GM10248 (cell line): ENCODE measurements at regions of chr11 and their contacts with region 1.

Region 1: GRCh38 chr11:95150946-95151684 is 61.5 kb downstream of the ENDOD1 start:
- DNase-seq: peak; percentile 93
- CTCF ChIP-seq: peak; percentile 84

Region 2: DNA sequence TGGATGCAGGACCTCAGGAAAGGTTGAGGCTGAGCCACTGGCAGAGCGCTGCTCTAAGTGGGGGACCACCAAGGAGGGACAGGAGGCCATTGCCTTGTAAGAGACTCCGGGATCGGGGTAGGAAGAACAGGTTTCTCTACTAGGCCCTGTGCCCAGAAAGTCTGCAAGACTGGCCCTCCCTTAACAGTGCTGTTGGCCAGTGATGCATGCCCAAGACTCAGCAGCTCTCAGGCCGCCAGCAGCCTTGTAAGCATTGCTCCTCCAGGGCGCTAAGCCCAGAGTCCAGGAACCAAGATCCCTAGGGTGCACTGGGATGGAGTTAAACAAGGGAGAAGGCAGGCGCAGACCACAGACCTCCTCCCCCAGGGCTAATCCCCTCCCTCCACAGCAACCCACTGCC is 1061.8 kb before region 1 on chr11:
- CTCF ChIA-PET with region 1: no interaction called
- POLR2A ChIA-PET with region 1: no interaction called
- DNase-seq: no peak
- CTCF ChIP-seq: no peak

Region 3: GRCh38 chr11:95138448-95138847 is 12.7 kb before region 1 on chr11:
- CTCF ChIA-PET with region 1: interaction called, 78 read pairs
- POLR2A ChIA-PET with region 1: no interaction called
- DNase-seq: peak; percentile 54
- CTCF ChIP-seq: peak; percentile 48

Region 4: DNA sequence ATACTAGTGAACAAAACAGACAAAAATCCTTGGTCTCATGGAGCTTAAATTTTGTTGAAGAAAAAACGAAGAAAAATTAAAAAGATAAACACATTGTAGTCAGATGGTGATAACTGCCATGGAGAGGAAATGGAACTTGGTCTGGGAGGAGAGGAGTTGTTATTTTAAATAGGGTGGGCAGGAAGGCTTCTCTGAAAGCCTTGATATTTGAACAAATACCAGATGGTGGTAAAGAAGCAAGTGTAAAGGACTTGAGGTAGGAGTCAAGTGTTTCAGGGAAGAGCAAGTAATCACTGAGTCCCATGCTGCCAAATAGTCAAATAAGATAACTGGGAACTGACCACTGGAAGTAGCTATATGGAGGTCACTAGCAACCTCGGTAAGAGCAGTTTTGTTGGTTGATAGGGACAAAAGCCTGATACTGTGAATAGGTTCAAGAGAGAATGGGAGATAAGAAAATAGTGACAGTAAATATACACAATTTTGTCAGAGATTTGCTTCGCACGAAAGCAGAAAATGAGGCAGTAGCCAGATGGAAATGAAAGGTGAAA is 24.8 kb after region 1 on chr11:
- CTCF ChIA-PET with region 1: interaction called, 11 read pairs
- POLR2A ChIA-PET with region 1: no interaction called
- DNase-seq: no peak
- CTCF ChIP-seq: no peak

Region 5: GRCh38 chr11:95187723-95188122 is 36.6 kb after region 1 on chr11:
- CTCF ChIA-PET with region 1: no interaction called
- POLR2A ChIA-PET with region 1: no interaction called
- DNase-seq: no peak
- CTCF ChIP-seq: no peak

Region 6: DNA sequence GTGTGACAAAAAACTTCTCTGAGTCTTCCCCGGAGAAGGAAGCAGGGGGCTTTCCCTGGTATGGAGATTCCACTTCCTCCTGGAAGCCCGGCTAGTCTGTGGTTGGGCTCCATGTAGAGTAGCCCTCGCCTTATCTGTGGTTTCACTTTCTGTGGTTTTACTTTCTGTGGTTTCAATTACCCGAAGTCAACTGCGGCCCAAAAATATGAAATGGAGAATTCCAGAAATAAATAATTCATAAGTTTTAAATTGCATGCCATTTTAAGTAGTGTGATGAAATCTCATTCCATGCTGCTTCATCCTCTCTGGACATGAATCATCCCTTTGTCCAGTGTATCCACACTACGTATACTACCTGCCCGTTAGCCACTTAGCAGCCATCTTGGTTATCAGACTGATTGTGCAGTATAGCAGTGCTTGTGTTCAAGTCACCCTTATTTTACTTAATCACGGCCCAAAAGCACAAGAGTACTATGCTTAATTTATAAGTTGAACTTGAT is 354.9 kb after region 1 on chr11:
- CTCF ChIA-PET with region 1: no interaction called
- POLR2A ChIA-PET with region 1: no interaction called
- DNase-seq: no peak
- CTCF ChIP-seq: no peak

Region 7: DNA sequence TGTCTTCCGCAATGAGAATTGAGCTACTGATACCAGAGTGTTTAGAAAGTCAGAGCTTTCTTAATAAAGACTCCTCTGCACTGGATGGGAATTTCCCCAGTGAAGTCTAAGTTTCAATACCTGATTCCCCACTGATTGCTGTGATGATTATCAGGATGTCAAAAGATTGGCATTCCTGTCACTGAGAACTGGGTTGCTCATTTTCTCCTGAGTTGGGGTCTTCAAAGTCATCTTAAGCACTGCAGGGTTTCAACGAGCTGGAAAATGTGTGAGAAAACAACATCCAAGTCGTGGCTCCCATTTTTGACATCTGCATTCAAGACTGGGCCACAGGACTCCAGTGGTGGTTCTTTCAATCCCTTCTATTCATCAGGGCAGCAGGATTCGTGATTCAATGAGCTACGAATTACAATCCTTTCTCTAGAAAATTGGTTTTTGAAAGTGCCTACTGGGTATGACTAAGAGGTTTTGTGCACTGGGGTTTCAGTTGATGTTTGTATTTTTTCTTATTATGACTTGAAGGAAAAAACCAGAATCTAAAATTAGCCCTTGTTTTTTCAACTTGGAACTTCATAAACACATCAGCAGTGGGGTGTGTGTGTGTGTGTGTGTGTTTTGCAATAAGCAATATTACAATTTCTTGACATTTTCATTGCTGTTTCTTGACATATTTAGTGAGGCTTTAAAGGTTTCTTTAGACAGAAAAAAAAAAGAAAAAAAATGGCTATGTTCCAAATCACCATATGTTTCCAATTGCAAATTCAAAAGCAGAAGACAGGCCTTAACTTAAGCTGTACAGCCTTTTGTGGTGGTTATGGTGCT is 405.4 kb after region 1 on chr11:
- CTCF ChIA-PET with region 1: no interaction called
- POLR2A ChIA-PET with region 1: no interaction called
- DNase-seq: peak; percentile 26
- CTCF ChIP-seq: no peak

Region 8: DNA sequence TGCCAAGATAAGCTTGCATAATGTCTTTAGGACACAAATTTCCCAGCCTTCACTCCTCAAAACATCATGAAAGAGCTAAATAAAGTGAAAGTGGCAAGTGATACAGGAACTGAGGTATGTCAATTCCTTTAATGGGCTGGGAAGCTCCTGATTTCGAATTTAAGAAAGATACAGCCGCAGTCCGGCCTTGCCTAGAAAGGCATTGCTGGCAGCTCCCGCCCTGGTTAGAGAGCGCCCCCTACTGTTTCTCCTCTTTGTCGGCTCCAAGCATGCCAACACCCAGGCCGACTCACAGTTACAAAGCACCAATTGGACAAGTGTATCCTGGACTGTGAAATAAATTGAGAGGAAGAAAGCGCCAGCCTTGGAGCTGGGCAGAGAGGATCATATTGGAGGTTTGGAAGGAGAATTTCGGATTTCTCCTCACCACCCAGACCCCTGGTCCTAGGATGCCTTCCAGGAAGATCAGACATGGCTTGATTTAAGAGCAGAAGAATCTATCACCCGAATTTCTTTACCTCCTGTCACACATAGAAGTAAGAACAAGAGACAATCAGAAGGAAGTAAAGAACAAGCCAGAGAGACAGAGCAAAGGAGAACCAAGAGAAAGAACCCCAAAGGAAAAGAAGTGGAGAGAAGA is 554.5 kb after region 1 on chr11:
- CTCF ChIA-PET with region 1: interaction called, 391 read pairs
- POLR2A ChIA-PET with region 1: no interaction called
- DNase-seq: peak; percentile 61
- CTCF ChIP-seq: peak; percentile 91

Region 9: DNA sequence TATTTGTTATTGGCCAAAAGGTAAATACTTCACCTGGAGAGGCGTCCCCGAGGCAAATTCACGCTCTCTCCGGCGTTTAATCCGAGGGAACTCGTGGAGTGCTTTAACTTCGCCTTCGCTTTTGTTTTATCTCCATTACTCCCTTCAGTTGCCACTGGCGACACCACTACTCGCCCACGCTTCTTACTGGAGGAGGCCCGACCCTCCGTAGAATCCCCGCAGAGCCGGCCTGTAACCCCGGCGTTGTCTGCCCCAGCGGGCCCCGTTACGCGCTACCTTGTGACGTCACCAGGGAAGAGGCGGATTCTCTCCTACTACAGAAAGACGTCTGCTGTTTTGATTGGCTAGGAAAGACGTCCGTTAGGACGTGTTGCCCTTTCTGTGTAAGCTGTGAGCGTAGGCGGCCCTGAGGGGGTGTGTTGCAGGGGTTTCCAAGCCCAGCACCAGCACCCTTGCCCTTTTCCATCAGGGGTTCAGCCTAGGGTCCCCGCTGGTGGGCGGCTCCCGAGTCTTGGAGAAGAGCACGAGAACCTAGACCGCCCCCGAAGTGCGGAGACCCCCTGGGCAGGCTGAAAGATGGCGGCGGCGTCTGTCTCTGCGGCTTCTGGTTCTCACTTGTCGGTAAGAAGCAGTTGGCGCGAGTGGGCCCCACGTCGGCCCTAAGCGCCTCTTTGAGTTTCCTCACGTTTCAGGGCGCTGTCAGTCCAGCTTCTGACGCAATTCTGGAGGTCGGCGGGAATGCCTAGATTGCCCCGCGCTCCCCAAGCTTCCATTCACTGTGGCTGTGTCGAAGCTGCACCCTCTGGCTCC is 639.2 kb after region 1 on chr11 and contains the start of gene CEP57:
- CTCF ChIA-PET with region 1: interaction called, 16 read pairs
- POLR2A ChIA-PET with region 1: no interaction called
- DNase-seq: peak; percentile 92
- CTCF ChIP-seq: no peak